Breast epithelium (tissue), 4 donors: ENCODE measurements at regions of chr17 and their contacts with region 1.

Region 1: DNA sequence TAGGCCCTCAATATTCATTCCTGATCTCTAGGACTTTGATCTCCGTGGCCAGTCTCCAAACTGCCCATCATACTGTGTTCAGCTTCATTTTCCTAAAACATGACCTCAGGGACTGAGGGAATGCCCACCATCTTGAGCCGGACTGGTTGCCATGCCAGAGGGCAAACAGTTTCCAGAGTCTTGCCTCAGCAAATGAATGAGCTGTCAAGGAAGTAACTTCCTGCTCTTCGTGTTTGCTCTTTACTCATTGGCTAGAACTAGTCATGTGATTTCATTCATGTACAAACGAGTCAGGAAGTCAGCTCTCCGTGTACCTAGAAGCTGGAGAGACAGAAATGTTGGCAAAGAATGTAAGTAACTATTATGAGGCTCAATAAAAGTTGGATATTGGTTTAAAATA is 50.2 kb downstream of the ANKFN1 start:
- DNase-seq: no peak
- H3K4me3 ChIP-seq: no peak overlapping the region
- H3K27ac ChIP-seq: no peak overlapping the region
- H3K4me1 ChIP-seq: no peaks in the 10 kb centered on the region
- H3K27me3 ChIP-seq: no peaks in the 10 kb centered on the region
- CTCF ChIP-seq: no peak
- POLR2A ChIP-seq: no peak

Region 2: GRCh38 chr17:54864636-54865356 is 1338.6 kb before region 1 on chr17:
- intact Hi-C with region 1: loop called (anchors 10 kb)
- DNase-seq: no peak
- H3K4me3 ChIP-seq: no peak overlapping the region
- H3K27ac ChIP-seq: no peak overlapping the region
- H3K4me1 ChIP-seq: no peaks in the 10 kb centered on the region
- H3K27me3 ChIP-seq: no peaks in the 10 kb centered on the region
- CTCF ChIP-seq: no peak
- POLR2A ChIP-seq: no peak